ENCODE measurements at regions of chr2 and their contacts with region 1.

Region 1: DNA sequence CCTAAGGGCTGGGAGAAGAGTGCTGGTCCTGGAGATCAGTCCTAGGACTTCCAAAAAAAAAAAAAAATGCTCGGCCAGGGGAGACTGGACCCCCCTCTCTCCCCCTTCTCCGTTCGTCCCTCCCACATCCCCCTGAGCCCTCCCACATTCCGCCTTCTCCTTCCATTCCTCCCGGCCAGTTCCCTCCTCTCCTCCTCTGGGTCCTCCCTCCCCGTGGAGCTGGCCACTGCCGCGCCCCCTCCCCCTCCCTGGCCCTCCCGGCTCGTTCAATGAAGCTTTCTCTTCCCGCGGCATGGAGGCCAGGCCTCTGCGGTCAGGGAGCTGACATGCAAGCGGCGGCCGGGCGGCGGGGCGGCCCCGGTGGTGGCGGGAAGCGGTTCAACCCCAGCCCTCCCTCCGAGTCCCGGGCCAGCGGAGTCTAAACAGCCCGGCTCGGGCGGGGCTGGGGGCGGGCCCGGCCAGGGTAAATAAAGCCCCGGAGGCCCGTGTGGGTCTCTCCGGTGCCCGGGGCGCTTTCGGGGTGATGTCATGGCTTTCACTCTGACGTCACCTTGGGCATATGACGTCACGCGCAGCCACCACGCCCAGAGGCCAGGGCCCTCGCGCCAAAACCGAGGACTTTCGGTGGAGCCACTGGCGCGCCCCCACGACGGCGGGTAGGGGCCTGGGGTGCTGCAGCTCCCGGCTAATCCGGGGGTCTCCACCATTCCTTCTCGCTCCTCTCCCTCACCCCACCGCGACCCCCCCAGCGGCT is at the start of gene LOXL3:
- DNase-seq: peak; percentile 84
- H3K4me3 Mint-ChIP-seq: peak within 1 kb of the TSS; percentile 97
- H3K27ac Mint-ChIP-seq: peak within 1 kb of the TSS; percentile 94
- H3K4me1 Mint-ChIP-seq: peaks cover 21% of the 10 kb centered on the region
- H3K27me3 Mint-ChIP-seq: peaks cover 19% of the 10 kb centered on the region
- total RNA-seq, gene LOXL3: 0.60 to 0.70 TPM

Region 2: GRCh38 chr2:74573747-74574562 is 19.9 kb after region 1 on chr2:
- CTCF ChIA-PET with region 1: no interaction called
- POLR2A ChIA-PET with region 1: interaction called, 14 read pairs
- DNase-seq: no peak
- H3K4me3 Mint-ChIP-seq: peak overlapping the region; percentile 48
- H3K27ac Mint-ChIP-seq: peak overlapping the region; percentile 77
- H3K4me1 Mint-ChIP-seq: peaks cover 51% of the 10 kb centered on the region
- H3K27me3 Mint-ChIP-seq: no peaks in the 10 kb centered on the region

Region 3: DNA sequence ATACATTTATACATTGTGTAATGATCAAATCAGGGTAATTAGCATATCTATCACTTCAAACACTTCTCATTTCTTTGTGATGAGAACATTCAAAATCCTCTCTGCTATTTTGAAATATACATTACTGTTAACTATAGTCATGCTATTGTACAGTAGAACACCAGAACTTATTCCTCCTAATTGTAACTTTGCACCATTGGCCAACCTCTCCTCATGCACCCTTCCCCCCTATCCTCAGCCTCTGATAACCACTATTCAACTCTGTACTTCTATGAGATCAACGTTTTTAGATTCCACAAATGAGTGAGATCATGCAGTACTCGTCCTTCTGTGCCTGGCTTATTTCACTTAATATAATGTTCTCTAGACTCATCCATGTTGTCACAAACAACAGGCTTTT is 54.9 kb after region 1 on chr2:
- CTCF ChIA-PET with region 1: no interaction called
- POLR2A ChIA-PET with region 1: no interaction called
- DNase-seq: no peak
- H3K4me3 Mint-ChIP-seq: no peak overlapping the region
- H3K27ac Mint-ChIP-seq: no peak overlapping the region
- H3K4me1 Mint-ChIP-seq: peaks cover 6% of the 10 kb centered on the region
- H3K27me3 Mint-ChIP-seq: peaks cover 59% of the 10 kb centered on the region

Region 4: DNA sequence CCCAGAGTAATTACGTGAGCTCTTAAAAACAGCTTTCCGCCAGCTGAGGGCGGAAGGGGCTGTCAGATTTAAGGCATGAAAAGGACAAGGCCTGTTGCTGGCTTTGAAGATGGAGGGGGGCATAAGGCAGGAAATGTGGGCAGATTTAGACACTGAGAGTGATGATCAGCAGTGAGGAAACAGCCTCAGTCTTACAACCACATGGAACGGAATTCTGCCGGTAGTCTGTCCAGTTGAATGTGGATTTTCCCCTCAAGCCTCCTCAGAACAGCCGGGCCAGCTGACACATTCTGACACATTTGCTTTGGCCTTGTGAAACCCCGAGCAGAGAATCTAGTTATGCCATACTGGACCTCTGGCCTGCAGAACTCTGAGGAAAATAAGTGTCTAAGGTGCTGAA is 420.9 kb after region 1 on chr2:
- CTCF ChIA-PET with region 1: no interaction called
- POLR2A ChIA-PET with region 1: no interaction called
- DNase-seq: no peak
- H3K4me3 Mint-ChIP-seq: no peak overlapping the region
- H3K27ac Mint-ChIP-seq: no peak overlapping the region
- H3K4me1 Mint-ChIP-seq: no peaks in the 10 kb centered on the region
- H3K27me3 Mint-ChIP-seq: no peaks in the 10 kb centered on the region